Posterior vena cava (tissue), 2 donors: ENCODE measurements at regions of chr5 and their contacts with region 1.

Region 1: DNA sequence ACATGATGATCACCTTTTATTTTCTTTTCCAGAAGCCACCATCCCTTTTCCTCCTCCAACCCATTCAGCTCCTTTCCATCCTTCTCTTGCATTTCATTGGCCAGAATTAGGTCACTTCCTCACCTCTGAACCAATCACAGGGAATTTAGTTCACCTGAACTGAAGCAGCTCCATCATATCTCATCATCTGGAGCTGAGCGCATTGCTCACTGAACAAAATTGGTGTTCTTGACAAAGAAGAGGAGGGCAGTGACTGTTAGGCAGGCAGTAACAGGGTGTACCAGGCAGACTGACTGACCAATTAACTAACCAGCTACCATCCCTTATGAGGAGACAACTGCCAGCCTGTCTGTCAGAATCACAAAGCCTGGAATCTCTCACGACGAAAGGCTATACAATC is 1.8 kb upstream of the ZNF354A start:
- DNase-seq: no peak

Region 2: DNA sequence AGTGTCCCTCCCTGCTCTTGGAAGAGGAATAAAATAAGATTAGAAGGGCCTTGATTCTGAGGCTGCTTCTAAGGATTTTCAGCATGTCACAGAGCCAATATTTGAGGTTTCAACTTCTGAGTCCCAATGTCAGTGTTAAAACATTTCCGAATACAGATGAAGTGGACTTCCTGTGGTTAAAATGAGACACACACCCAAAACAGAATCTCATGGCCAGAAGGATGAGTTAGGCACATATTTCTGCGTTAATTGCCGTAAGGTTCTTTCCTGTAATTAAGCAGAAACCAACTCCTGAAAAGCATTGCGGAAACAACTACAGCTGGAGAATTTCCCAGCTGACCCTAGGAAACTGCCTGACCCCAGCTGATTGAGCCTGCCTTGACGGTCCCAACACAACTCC is 117.0 kb after region 1 on chr5:
- intact Hi-C with region 1: loop called in 1 of 2 experiments (anchors 10 kb)
- DNase-seq: no peak

Region 3: GRCh38 chr5:179648410-179648809 is 916.1 kb after region 1 on chr5:
- intact Hi-C with region 1: loop called in 1 of 2 experiments (anchors 5 kb)
- DNase-seq: no peak